ENCODE measurements at regions of chr10 and their contacts with region 1.

Region 1: DNA sequence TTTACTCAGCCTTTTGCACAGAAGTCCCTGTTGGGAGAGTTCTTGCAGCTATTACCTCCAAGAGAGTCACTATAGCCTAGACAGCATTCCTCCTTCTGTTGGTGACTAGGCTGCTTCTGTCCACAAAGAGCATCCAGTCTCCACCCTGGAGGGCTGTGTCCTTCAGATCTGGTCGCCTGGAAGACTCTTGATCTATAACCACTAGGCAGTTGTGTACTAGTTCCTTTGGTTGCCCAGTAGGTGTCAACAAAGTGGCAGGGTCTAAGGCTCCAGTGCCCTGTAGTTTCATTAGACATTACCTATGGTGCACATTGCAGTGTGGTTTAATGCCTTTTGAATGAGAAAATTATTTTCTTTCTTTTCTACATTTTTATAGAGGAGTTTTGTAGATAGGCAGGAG is 11.3 kb upstream of the AKR1C2 start:
- DNase-seq: no peak
- H3K4me3 ChIP-seq: no peak overlapping the region
- H3K27ac ChIP-seq: no peak overlapping the region
- H3K4me1 ChIP-seq: peaks cover 8 to 22% (median 18%) of the 10 kb centered on the region in 4 donors
- H3K27me3 ChIP-seq: no peaks in the 10 kb centered on the region
- CTCF ChIP-seq: no peak
- EP300 ChIP-seq: no peak
- POLR2A ChIP-seq: no peak

Region 2: DNA sequence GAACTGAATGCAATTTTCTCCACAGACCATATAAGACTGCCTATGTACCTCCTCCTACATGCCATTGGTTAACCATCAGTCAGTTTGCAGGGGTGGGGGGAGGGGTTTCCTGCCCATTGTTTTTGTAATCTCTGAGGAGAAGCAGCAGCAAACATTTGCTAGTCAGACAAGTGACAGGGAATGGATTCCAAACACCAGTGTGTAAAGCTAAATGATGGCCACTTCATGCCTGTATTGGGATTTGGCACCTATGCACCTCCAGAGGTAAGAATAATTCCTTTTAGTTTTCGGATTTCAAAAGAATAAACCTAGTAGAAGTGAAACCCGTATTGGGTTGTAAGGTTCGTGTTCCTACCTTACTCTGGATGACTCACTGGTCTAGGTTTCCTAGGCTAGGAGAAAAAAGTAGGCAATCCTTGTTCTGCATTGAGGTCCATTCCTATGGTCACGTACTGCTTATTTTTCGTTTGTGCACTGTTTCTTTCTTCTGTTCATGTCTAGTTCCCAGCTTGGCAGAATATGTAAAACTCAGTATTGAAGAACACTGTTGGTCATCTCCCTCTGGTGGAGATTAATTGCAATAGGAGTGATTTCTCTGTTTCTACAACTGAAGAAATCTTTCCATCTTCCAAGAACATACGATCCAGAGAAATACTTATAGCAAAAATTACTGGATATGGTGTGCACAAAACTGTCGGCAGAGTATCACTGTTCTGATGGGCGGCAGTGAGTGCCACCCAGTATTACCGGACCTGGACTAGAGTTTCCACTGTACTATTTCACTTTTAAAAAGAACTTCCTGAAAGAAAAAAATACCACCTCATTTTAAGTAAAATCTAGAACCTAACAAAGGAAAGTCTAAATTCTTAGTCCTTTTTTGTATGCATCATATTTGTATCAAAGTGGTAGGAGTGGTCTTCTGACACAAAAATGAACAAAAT is 79.6 kb after region 1 on chr10 and contains the start of gene AKR1C3:
- intact Hi-C with region 1: loop called (anchors 5 kb)
- DNase-seq: no peak
- H3K4me3 ChIP-seq: peak within 1 kb of the TSS; percentile 50 to 60 (median 54)
- H3K27ac ChIP-seq: peak within 1 kb of the TSS; percentile 54 to 64 (median 58)
- H3K4me1 ChIP-seq: peaks cover 0 to 10% (median 3%) of the 10 kb centered on the region in 4 donors
- H3K27me3 ChIP-seq: no peaks in the 10 kb centered on the region
- CTCF ChIP-seq: peak; percentile 69 to 77 (median 70)
- EP300 ChIP-seq: no peak
- POLR2A ChIP-seq: no peak
- total RNA-seq, gene AKR1C3: 12.1 to 29.7 (median 19.3) TPM

Region 3: GRCh38 chr10:5105626-5106025 is 90.7 kb after region 1 on chr10:
- intact Hi-C with region 1: no loop called
- DNase-seq: no peak
- H3K4me3 ChIP-seq: no peak overlapping the region
- H3K27ac ChIP-seq: no peak overlapping the region
- H3K4me1 ChIP-seq: no peaks in the 10 kb centered on the region
- H3K27me3 ChIP-seq: no peaks in the 10 kb centered on the region
- CTCF ChIP-seq: no peak
- EP300 ChIP-seq: no peak
- POLR2A ChIP-seq: no peak

Measured in esophagus muscularis mucosa (tissue), 4 donors.